Activated CD8-positive, alpha-beta memory T cell treated with anti-CD3 and anti-CD28 coated beads, Interleukin-2, amount 10 ng/mL, durations not matched to agents 7 days and 5 days (primary cell): ENCODE measurements at regions of chr1 and their contacts with region 1.

Region 1: DNA sequence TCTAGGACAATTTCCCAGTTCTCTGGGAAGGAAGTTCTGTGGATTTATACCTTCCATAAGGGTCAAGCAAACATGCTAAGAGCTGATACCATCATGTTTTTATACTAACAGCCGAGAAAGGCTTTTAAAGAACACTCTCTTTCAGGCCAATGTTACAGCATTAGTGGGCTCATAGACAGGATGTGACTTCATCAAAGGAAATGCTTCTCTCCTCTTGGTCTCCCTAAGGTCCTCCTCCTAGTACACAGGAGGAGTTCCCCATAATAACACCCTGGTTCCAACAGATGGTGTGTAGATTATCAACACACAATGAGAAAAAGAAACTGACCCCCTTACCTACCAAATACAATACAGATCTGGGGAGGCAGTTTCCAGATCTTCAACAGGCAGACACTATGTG is 26.7 kb upstream of the GLIS1 start:
- DNase-seq: no peak
- ATAC-seq: peak; percentile 90
- H3K4me3 Mint-ChIP-seq: peak overlapping the region; percentile 59
- H3K27ac Mint-ChIP-seq: peak overlapping the region; percentile 81
- H3K4me1 Mint-ChIP-seq: peaks cover 31% of the 10 kb centered on the region
- H3K27me3 Mint-ChIP-seq: no peaks in the 10 kb centered on the region

Region 2: GRCh38 chr1:53754484-53755312 is 11.0 kb before region 1 on chr1:
- CTCF ChIA-PET with region 1: interaction called, 18 read pairs
- DNase-seq: peak; percentile 53
- ATAC-seq: no peak
- H3K4me3 Mint-ChIP-seq: no peak overlapping the region
- H3K27ac Mint-ChIP-seq: no peak overlapping the region
- H3K4me1 Mint-ChIP-seq: no peaks in the 10 kb centered on the region
- H3K27me3 Mint-ChIP-seq: no peaks in the 10 kb centered on the region

Region 3: GRCh38 chr1:53945433-53946251 is 180.0 kb after region 1 on chr1 and contains the start of gene IFT25:
- CTCF ChIA-PET with region 1: no interaction called
- DNase-seq: peak; percentile 98
- ATAC-seq: peak; percentile 75
- H3K4me3 Mint-ChIP-seq: peak within 1 kb of the TSS; percentile 99
- H3K27ac Mint-ChIP-seq: peak within 1 kb of the TSS; percentile 96
- H3K4me1 Mint-ChIP-seq: peaks cover 53% of the 10 kb centered on the region
- H3K27me3 Mint-ChIP-seq: no peaks in the 10 kb centered on the region
- total RNA-seq, gene IFT25: 69.3 to 82.6 TPM